ENCODE measurements at regions of chr7 and their contacts with region 1.

Region 1: GRCh38 chr7:87876040-87876868 is at the starts of genes DBF4 and SLC25A40:
- DNase-seq: peak; percentile 94
- H3K4me3 Mint-ChIP-seq: peak within 1 kb of the TSS; percentile 91
- H3K27ac Mint-ChIP-seq: peak within 1 kb of the TSS; percentile 91
- H3K4me1 Mint-ChIP-seq: peaks cover 41% of the 10 kb centered on the region
- H3K27me3 Mint-ChIP-seq: no peaks in the 10 kb centered on the region
- total RNA-seq, gene DBF4: 70.1 to 70.6 TPM
- total RNA-seq, gene SLC25A40: 32.7 to 38.3 TPM

Region 2: GRCh38 chr7:86939197-86939814 is 936.9 kb before region 1 on chr7:
- CTCF ChIA-PET with region 1: no interaction called
- intact Hi-C with region 1: loop called (anchors 10 kb)
- DNase-seq: peak; percentile 62
- H3K4me3 Mint-ChIP-seq: no peak overlapping the region
- H3K27ac Mint-ChIP-seq: no peak overlapping the region
- H3K4me1 Mint-ChIP-seq: no peaks in the 10 kb centered on the region
- H3K27me3 Mint-ChIP-seq: no peaks in the 10 kb centered on the region

Region 3: GRCh38 chr7:87345166-87345927 is 530.9 kb before region 1 on chr7 and contains the start of gene CROT:
- CTCF ChIA-PET with region 1: no interaction called
- intact Hi-C with region 1: loop called (anchors 1 kb)
- DNase-seq: peak; percentile 97
- H3K4me3 Mint-ChIP-seq: peak within 1 kb of the TSS; percentile 89
- H3K27ac Mint-ChIP-seq: peak within 1 kb of the TSS; percentile 86
- H3K4me1 Mint-ChIP-seq: peaks cover 32% of the 10 kb centered on the region
- H3K27me3 Mint-ChIP-seq: no peaks in the 10 kb centered on the region
- total RNA-seq, gene CROT: 6.0 to 6.1 TPM

Region 4: DNA sequence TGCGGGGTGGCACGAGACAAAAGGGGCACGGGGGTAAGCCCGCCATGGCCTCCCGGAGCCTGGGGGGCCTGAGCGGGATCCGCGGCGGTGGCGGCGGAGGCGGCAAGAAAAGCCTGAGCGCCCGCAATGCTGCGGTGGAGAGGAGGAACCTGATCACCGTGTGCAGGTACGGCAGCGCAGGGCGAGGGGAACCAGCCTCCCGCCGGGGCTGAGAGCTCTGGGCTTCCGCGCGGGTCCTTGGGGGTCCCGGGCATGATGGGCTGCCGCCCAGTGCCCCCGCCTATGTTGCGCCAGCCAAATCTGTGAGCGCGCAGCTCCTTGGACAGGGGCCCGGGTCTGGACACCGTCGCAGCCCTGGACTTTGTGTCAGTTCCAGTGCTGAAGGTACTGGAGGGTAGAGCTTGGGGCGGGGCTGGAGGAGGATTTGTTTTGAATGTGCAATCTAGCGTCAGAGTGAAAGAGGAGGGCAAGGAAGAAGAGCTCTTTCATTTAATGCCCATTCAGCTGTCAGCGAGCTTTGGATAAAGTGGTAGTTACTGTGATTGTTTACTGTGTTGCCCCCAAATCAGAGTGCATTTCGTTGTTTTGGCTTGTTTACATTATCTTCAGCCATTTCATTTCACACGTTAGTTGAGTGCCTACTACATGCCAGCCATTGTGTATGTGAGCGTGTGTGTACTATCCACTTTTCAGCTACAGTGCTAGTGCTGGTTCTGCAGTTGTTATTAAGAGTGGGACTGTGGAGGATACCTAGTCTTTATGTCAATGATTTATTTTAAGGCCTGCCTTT is 247.3 kb before region 1 on chr7:
- CTCF ChIA-PET with region 1: no interaction called
- intact Hi-C with region 1: loop called (anchors 1 kb)
- DNase-seq: peak; percentile 33
- H3K4me3 Mint-ChIP-seq: peak overlapping the region; percentile 75
- H3K27ac Mint-ChIP-seq: no peak overlapping the region
- H3K4me1 Mint-ChIP-seq: peaks cover 7% of the 10 kb centered on the region
- H3K27me3 Mint-ChIP-seq: peaks cover 6% of the 10 kb centered on the region

Region 5: GRCh38 chr7:87933945-87934698 is 57.9 kb after region 1 on chr7 and contains the start of gene ADAM22:
- CTCF ChIA-PET with region 1: no interaction called
- intact Hi-C with region 1: loop called (anchors 1 kb)
- DNase-seq: peak; percentile 85
- H3K4me3 Mint-ChIP-seq: peak within 1 kb of the TSS; percentile 84
- H3K27ac Mint-ChIP-seq: no peak within 1 kb of the TSS
- H3K4me1 Mint-ChIP-seq: peaks cover 10% of the 10 kb centered on the region
- H3K27me3 Mint-ChIP-seq: peaks cover 7% of the 10 kb centered on the region
- total RNA-seq, gene ADAM22: 1.2 to 1.9 TPM

Region 6: DNA sequence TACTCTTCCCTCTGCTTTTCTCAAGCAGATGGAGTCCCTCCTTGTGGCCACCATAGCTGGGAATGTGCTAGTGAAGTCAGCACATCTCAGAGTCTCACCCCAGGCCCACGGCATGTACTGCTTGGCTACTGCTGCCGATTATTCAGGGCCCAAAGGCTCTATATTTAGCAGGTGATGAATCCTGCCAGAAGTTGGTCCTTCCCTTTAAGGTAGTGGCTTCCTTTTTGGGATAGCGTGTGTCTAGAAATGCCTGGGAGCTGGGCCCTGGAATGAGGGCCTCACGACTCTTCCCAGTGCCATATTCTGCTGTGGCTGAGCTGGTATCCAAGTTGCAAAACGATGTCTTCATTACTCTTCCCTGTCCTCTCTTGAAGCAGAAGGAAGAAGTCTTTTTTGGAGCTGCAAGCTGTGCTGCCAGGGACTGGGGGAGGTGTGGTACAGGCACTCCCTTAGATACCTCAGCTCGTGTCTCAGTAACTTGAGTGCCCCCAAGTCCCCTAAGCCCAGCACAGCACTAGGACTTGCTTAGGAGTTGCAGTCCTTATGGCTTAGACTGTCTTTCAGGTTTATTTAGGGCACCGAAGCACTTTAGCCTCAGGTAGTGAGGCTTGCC is 157.9 kb after region 1 on chr7:
- CTCF ChIA-PET with region 1: no interaction called
- intact Hi-C with region 1: no loop called
- DNase-seq: no peak
- H3K4me3 Mint-ChIP-seq: no peak overlapping the region
- H3K27ac Mint-ChIP-seq: no peak overlapping the region
- H3K4me1 Mint-ChIP-seq: no peaks in the 10 kb centered on the region
- H3K27me3 Mint-ChIP-seq: no peaks in the 10 kb centered on the region

Region 7: GRCh38 chr7:88219781-88220747 is 343.8 kb after region 1 on chr7 and contains the start of gene SRI:
- CTCF ChIA-PET with region 1: no interaction called
- intact Hi-C with region 1: loop called (anchors 1 kb)
- DNase-seq: peak; percentile 89
- H3K4me3 Mint-ChIP-seq: peak within 1 kb of the TSS; percentile 89
- H3K27ac Mint-ChIP-seq: peak within 1 kb of the TSS; percentile 88
- H3K4me1 Mint-ChIP-seq: peaks cover 23% of the 10 kb centered on the region
- H3K27me3 Mint-ChIP-seq: no peaks in the 10 kb centered on the region
- total RNA-seq, gene SRI: 152 to 168 TPM

Region 8: GRCh38 chr7:88576720-88577119 is 700.5 kb after region 1 on chr7:
- CTCF ChIA-PET with region 1: no interaction called
- intact Hi-C with region 1: no loop called
- DNase-seq: no peak
- H3K4me3 Mint-ChIP-seq: no peak overlapping the region
- H3K27ac Mint-ChIP-seq: no peak overlapping the region
- H3K4me1 Mint-ChIP-seq: no peaks in the 10 kb centered on the region
- H3K27me3 Mint-ChIP-seq: no peaks in the 10 kb centered on the region

Measured in activated naive CD4-positive, alpha-beta T cell treated with anti-CD3 and anti-CD28 coated beads for 36 hours (primary cell).